ENCODE measurements at regions of chr16 and their contacts with region 1.

Region 1: DNA sequence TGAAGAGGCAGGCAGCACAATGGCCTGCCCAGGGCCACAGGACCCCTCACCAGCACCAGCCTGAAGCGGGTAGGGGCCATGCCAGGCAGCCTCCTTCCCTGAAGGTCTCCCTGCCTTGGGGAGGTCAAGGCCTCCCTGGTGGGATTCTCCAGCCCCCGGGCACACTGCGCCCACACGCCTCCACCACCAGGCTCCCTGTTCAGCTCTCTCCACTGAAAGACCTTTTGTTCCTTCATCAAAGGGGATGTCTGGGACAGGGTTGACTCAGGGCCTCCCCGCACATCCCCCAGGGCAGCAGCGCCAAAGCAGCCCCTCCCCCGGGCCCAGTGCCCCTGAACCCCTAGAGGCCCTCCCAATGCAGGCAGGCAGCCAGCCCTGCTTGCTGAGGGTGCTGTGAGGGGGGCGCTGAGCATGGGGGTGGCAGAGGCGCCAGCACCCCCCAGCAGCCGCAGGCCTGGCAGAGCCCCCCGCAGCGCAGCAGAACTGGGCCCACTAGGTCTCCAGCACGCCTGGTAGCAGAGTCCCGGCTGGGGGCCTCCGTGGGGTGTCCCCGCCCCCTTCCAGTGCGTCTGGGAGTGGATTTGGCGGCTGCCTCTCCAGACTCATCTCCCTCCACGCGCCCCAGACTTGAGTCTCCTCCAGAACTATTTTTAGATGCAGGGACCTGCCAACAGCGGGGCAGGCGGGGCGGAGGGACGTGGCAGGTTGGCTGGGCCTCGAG is 13.1 kb downstream of the BCAR1 start:
- DNase-seq: peak; percentile 74
- H3K4me3 ChIP-seq: no peak overlapping the region
- H3K27ac ChIP-seq: peak overlapping the region; percentile 76 to 78
- H3K4me1 ChIP-seq: peaks cover 25% of the 10 kb centered on the region
- H3K27me3 ChIP-seq: no peaks in the 10 kb centered on the region
- CTCF ChIP-seq: no peak
- POLR2A ChIP-seq: no peak

Region 2: DNA sequence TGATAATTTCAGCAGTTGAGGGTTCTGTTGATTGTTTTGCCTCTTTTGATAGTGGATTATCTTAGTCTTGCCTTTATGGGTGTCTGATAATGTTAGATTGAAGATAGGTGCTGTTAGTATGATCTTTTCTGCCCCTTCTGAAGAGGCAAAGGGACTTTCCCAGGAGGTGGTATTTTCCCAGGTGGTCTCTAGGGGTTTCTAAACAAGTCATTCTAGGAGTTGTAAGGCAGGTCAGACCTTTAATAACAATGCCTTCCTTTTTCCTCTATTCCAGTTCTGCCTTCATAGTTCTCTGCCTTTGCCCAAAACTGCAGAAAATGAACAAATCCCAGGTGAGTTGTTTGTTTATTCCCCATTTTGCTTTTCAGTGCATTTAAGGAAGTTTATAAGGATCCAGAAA is 85.7 kb before region 1 on chr16:
- intact Hi-C with region 1: no loop called
- DNase-seq: no peak
- H3K4me3 ChIP-seq: no peak overlapping the region
- H3K27ac ChIP-seq: no peak overlapping the region
- H3K4me1 ChIP-seq: no peaks in the 10 kb centered on the region
- H3K27me3 ChIP-seq: no peaks in the 10 kb centered on the region
- CTCF ChIP-seq: no peak
- POLR2A ChIP-seq: no peak

Region 3: DNA sequence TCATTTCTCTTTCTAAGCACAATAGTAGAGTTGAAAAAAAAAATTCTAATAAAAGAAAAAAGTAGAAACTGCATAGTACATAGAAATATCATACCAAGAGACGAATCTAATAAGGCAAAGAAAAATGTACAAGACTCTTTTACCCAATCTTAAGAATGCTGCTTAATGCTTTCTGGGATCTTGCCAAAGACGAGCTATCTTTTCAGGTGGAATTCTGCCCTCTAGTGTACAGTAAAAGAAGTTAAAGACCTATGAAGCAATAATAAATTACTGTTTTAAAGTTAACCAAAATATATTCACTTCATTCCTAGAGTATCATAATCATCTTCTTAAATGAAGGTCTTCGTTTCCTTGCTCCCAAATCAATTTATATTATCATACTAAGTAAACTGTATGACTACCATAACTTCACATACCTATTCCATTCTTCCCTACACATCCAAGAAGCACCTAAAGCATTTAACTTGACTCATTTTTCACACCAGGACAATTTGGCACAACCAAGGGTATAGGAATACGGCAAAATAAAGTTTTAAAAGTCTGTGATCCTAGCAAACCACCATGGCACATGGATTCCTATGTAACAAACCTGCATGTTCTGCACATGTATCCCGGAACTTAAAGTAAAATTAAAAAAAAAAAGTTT is 147.3 kb after region 1 on chr16:
- intact Hi-C with region 1: loop called (anchors 2 kb)
- DNase-seq: no peak
- H3K4me3 ChIP-seq: no peak overlapping the region
- H3K27ac ChIP-seq: no peak overlapping the region
- H3K4me1 ChIP-seq: no peaks in the 10 kb centered on the region
- H3K27me3 ChIP-seq: no peaks in the 10 kb centered on the region
- CTCF ChIP-seq: peak; percentile 47 to 90 (median 88)
- POLR2A ChIP-seq: no peak

Region 4: GRCh38 chr16:75402821-75403475 is 164.7 kb after region 1 on chr16:
- intact Hi-C with region 1: loop called (anchors 5 kb)
- DNase-seq: no peak
- H3K4me3 ChIP-seq: no peak overlapping the region
- H3K27ac ChIP-seq: peak overlapping the region; percentile 10 to 50
- H3K4me1 ChIP-seq: peaks cover 6% of the 10 kb centered on the region
- H3K27me3 ChIP-seq: no peaks in the 10 kb centered on the region
- CTCF ChIP-seq: peak in 3 of 4 experiments; percentile 42 to 75 (median 71)
- POLR2A ChIP-seq: no peak

Measured in prostate gland (tissue), 2 donors.